ENCODE measurements at regions of chr3 and their contacts with region 1.

Region 1: GRCh38 chr3:26712211-26713026 is 89.8 kb downstream of the LRRC3B start:
- DNase-seq: no peak

Region 2: DNA sequence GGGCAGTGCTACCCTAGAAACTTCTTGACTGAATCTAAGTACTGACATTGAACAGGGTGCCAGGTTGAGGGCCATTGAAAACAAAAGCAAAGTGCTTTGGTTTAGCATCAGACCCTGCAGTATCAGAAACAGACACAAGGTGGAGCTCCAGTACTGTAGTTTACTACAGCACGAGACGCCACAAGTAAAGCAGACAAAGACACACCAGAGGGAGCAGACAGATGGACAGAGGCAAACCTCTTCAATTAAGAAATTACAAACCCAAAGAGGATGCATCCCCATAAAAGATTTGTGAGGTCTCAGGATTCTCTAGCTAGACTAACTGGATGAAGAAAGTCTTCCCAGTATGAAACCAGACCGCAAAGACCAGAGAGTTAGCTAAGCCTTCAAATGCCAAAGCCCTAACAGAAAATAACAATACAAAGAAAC is 1064.3 kb before region 1 on chr3:
- intact Hi-C with region 1: loop called in 1 of 2 experiments (anchors 10 kb)
- DNase-seq: no peak

Region 3: GRCh38 chr3:25843332-25843731 is 869.1 kb before region 1 on chr3:
- intact Hi-C with region 1: loop called in 1 of 2 experiments (anchors 5 kb)
- DNase-seq: no peak

Region 4: GRCh38 chr3:26614006-26614685 is 98.3 kb before region 1 on chr3:
- intact Hi-C with region 1: no loop called
- DNase-seq: no peak

Region 5: GRCh38 chr3:26731843-26732242 is 19.4 kb after region 1 on chr3:
- intact Hi-C with region 1: no loop called
- DNase-seq: no peak

Region 6: GRCh38 chr3:26750263-26750662 is 37.8 kb after region 1 on chr3:
- intact Hi-C with region 1: no loop called
- DNase-seq: no peak

Measured in posterior vena cava (tissue), 2 donors.